Breast epithelium (tissue), 4 donors: ENCODE measurements at regions of chr4 and their contacts with region 1.

Region 1: GRCh38 chr4:122819708-122820449 is 6.8 kb upstream of the FGF2 start:
- DNase-seq: no peak
- H3K4me3 ChIP-seq: no peak overlapping the region
- H3K27ac ChIP-seq: no peak overlapping the region
- H3K4me1 ChIP-seq: no peaks in the 10 kb centered on the region
- H3K27me3 ChIP-seq: no peaks in the 10 kb centered on the region
- CTCF ChIP-seq: no peak
- POLR2A ChIP-seq: no peak

Region 2: GRCh38 chr4:121784975-121785374 is 1034.9 kb before region 1 on chr4:
- intact Hi-C with region 1: loop called (anchors 5 kb)
- DNase-seq: peak in 1 of 2 donors; percentile 78
- H3K4me3 ChIP-seq: no peak overlapping the region
- H3K27ac ChIP-seq: peak overlapping the region; percentile 69 to 72
- H3K4me1 ChIP-seq: no peaks in the 10 kb centered on the region
- H3K27me3 ChIP-seq: peaks cover 0 to 3% of the 10 kb centered on the region in 2 donors
- CTCF ChIP-seq: no peak
- POLR2A ChIP-seq: no peak

Region 3: DNA sequence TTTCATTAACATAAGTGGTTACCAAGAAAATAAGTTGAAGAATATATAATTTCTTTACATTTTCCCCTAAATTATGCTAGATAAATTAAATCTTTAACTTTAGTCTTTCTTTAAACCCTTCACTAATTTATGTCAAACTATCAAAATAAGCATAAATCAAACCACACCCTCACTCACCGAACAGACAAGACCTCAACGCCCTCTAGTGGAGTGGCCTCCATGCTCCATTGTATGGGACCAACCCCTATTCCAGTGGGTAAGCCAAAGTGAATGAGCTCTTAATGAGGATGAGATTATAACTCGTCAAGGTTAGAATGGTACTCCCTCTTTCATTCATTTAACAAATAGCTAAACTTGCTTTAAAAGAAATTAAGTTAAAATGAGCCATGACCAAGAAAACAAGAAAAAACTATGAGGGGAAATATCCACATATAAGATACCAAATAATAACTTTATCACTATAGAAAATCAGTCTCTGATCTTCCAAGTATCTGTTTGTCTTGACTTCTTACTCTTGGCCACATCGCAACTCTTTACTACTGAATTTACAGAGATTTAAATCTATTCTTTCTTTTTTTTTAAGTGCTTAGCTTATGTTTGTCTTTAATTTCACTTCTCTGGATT is 102.9 kb before region 1 on chr4:
- intact Hi-C with region 1: no loop called
- DNase-seq: peak; percentile 25 to 58
- H3K4me3 ChIP-seq: no peak overlapping the region
- H3K27ac ChIP-seq: no peak overlapping the region
- H3K4me1 ChIP-seq: no peaks in the 10 kb centered on the region
- H3K27me3 ChIP-seq: no peaks in the 10 kb centered on the region
- CTCF ChIP-seq: peak; percentile 43 to 55 (median 52)
- POLR2A ChIP-seq: no peak